Activated naive CD4-positive, alpha-beta T cell treated with anti-CD3 and anti-CD28 coated beads for 36 hours (primary cell): ENCODE measurements at regions of chr9 and their contacts with region 1.

Region 1: GRCh38 chr9:137223078-137223970 is 1.3 kb upstream of the RNF208 start:
- DNase-seq: peak; percentile 99
- H3K4me3 Mint-ChIP-seq: peak overlapping the region; percentile 85
- H3K27ac Mint-ChIP-seq: no peak overlapping the region
- H3K4me1 Mint-ChIP-seq: peaks cover 8% of the 10 kb centered on the region
- H3K27me3 Mint-ChIP-seq: peaks cover 2% of the 10 kb centered on the region

Region 2: GRCh38 chr9:137114610-137115391 is 108.5 kb before region 1 on chr9 and contains the start of gene DPP7:
- CTCF ChIA-PET with region 1: interaction called, 19 read pairs
- intact Hi-C with region 1: loop called (anchors 1 kb)
- DNase-seq: peak; percentile 74
- H3K4me3 Mint-ChIP-seq: peak within 1 kb of the TSS; percentile 73
- H3K27ac Mint-ChIP-seq: no peak within 1 kb of the TSS
- H3K4me1 Mint-ChIP-seq: peaks cover 14% of the 10 kb centered on the region
- H3K27me3 Mint-ChIP-seq: no peaks in the 10 kb centered on the region
- total RNA-seq, gene DPP7: 162 to 167 TPM

Region 3: GRCh38 chr9:137150617-137151457 is 72.5 kb before region 1 on chr9:
- CTCF ChIA-PET with region 1: no interaction called
- intact Hi-C with region 1: loop called (anchors 1 kb)
- DNase-seq: peak; percentile 89
- H3K4me3 Mint-ChIP-seq: no peak overlapping the region
- H3K27ac Mint-ChIP-seq: peak overlapping the region; percentile 61
- H3K4me1 Mint-ChIP-seq: peaks cover 7% of the 10 kb centered on the region
- H3K27me3 Mint-ChIP-seq: peaks cover 16% of the 10 kb centered on the region

Region 4: DNA sequence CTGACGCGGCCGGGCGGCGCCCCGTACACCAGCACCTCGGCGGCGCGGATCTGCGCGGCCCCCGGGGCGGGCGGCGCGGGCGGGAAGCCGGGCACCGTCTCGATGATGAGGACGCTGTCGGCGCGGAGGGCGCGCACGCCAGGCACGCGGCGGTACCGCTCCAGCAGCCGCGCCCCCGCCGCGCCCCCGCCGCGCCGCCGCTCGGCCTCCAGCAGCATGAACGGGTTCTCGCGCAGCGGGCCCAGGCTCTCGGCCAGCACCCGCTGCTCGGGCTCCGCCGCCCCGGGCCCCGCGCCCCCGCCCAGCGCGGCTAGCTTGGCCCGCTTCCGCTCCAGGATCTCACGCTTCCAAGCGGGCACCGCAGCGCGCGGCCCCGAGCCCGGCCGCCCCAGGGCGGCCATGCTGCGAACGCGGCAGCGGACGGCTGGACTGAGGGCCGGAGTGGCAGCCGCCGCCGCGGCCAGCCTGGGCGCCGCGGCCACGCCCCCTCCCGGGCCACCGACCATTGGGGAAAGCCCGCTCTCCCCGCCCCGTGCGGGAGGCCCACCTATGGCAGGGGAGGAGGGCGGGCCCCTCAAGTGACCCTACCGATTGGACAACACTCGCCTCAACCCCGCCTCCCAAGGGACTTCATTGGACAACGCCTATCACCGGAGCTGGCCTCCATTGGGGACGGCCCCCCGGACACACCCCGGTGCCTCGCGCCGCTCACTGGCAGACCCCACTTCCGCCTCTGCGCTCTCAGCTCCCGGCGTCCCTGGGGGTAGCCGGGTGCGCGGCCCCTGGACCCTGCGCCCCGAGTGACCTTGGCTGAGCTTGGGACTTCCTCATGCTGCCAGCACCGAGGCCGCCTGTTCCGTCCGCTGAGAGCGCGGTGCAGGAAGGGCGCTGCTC is 22.8 kb before region 1 on chr9 and contains the start of gene TPRN:
- CTCF ChIA-PET with region 1: no interaction called
- intact Hi-C with region 1: loop called (anchors 1 kb)
- DNase-seq: peak; percentile 99
- H3K4me3 Mint-ChIP-seq: peak within 1 kb of the TSS; percentile 80
- H3K27ac Mint-ChIP-seq: peak within 1 kb of the TSS; percentile 56
- H3K4me1 Mint-ChIP-seq: peaks cover 33% of the 10 kb centered on the region
- H3K27me3 Mint-ChIP-seq: no peaks in the 10 kb centered on the region
- total RNA-seq, gene TPRN: 2.1 to 2.6 TPM

Region 5: DNA sequence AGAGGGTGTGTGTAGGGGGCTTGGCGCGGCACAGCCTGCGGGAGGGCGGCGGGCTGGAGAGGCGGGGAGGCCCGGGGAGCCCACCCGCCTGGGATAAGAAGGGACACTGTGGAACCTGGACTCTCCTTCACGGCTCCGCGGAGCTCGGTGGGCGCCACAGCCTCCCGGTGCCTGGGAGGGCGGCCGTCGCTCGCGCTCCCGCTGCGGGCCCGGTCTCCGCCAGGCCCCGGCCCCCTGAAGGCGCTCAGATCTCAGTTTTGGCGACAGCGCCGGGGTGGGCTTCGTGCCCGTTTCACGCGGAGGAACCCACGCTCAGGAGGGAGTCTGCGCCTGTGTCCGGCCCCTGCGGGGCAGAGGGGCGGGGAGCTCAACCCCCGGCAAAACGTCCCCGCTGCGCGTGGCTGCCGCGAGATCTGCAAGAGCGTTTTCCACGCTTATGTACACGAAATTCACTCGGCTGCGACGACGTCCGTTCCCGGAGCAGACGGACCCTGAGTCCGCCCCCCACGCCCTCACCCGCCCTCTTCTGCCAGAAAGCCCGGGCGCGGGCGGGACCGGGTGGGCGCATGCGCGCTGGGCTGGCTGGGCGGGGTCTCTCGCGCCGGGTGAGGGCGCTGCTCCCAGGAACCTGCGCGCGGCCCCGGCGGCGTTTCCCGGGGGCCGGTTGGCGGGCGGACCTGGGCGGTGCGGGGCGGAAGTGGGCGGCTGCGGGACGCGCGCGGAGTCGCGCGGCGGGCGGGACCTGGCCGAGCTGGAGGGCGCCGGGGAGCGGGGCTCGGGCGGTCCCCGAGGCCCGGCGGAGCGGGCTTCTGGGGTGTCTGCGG is 31.5 kb after region 1 on chr9 and contains the start of gene NELFB:
- CTCF ChIA-PET with region 1: no interaction called
- intact Hi-C with region 1: loop called (anchors 1 kb)
- DNase-seq: peak; percentile 95
- H3K4me3 Mint-ChIP-seq: peak within 1 kb of the TSS; percentile 85
- H3K27ac Mint-ChIP-seq: peak within 1 kb of the TSS; percentile 75
- H3K4me1 Mint-ChIP-seq: peaks cover 18% of the 10 kb centered on the region
- H3K27me3 Mint-ChIP-seq: no peaks in the 10 kb centered on the region
- total RNA-seq, gene NELFB: 47.0 to 47.1 TPM

Region 6: DNA sequence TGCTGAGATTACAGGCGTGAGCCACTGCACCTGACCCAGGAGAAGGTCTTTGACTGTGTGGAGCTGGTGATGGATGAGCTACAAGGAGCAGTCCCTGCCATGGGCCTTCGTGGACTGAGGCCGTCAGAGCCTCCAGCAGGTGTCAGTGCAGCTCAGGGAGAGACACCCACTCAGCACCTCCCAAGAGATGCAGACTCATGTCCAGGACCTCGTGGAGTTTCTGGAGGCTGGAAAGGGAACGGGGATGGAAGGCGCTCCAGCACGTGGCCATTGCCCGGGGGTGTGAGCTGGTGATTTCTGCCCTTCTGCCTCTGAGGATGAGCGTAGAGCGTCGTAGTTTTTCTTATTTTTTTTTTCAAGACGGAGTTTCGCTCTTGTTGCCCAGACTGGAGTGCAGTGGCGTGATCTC is 63.7 kb after region 1 on chr9:
- CTCF ChIA-PET with region 1: no interaction called
- intact Hi-C with region 1: no loop called
- DNase-seq: peak; percentile 46
- H3K4me3 Mint-ChIP-seq: no peak overlapping the region
- H3K27ac Mint-ChIP-seq: no peak overlapping the region
- H3K4me1 Mint-ChIP-seq: no peaks in the 10 kb centered on the region
- H3K27me3 Mint-ChIP-seq: peaks cover 10% of the 10 kb centered on the region

Region 7: DNA sequence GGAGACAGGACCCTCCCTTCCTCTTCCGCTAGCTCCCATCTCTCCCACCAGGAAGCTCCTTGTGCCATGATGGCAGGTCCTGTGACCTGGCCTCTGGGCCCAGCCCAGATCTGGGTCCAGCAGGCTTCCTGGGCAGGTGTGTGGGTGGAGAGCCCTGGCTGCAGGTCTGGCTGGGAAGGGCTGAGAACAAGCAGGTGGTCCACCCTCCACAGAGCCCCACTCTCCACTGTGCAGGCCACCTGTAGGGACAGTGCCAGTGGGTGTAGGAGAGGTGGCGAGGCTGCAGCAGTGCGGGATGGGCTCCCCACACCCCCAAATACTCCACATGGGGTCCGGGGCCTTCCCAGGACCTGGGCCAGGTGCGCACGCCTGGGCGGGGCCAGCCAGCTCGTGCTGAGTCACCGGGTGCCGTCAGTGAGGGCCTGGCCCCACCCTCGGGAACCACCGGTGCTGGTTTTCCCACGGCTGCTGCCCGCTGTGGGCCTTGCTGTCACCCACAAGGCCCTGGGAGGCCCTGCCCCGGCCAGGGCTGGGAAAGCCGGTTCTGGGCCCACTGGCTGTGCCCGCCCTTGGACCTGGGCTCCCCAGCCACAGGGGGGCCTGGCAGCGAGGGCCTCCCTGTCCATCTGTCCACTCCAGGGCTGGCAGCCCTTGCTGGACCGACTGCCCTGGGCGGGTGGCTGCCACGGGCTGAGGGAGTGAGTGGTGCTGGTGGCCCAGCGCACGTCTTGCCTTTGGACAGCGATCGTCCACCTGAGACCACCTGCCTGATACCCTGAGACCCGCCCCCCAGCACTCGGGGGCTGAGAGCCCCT is 88.1 kb after region 1 on chr9:
- CTCF ChIA-PET with region 1: no interaction called
- intact Hi-C with region 1: no loop called
- DNase-seq: peak; percentile 60
- H3K4me3 Mint-ChIP-seq: no peak overlapping the region
- H3K27ac Mint-ChIP-seq: no peak overlapping the region
- H3K4me1 Mint-ChIP-seq: no peaks in the 10 kb centered on the region
- H3K27me3 Mint-ChIP-seq: no peaks in the 10 kb centered on the region

Region 8: DNA sequence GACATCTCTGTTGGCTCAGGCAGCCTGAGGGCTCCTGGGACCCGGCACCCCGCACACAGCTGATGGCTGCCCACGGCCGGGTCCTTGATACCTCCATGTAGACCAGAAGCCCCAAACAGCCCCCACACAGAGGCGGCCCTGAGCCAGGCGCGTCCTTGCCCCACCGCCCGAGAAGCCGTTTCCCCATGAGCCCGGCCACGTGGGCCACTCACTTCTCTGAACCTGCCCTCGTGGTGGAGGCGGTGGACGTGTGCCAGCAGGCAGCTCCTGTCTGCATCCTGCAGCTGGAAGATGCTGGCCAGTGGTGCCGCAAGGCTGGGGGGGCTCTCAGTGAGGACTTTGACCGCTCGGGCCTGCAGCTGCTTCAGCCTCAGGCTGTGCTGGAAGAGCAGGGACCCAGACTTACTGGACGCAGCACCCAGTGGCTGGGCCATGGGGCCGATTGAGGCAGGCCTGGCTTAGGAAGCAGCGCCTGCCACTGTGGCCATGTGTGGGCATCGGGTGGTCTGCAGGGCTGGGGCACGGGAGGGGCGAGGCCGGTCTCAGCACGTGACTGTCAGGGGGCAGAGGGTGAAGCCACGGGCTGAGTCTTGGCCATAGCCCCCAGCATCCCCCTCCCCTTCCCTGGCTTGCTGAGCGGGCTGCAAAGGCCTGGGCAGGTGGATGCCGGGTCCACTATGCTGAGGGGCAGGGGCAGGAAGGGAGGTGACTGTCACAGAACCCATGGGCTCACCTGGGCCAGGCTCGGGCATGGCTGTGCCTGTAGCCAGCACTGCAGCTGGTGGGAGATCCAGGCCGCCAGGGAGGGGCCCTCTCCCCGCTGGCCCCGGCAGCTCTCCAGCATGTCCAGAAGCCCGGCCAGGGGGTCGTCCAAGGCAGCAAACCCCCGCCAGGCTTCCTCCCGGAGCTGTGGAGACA is 149.6 kb after region 1 on chr9:
- CTCF ChIA-PET with region 1: no interaction called
- intact Hi-C with region 1: no loop called
- DNase-seq: no peak
- H3K4me3 Mint-ChIP-seq: no peak overlapping the region
- H3K27ac Mint-ChIP-seq: no peak overlapping the region
- H3K4me1 Mint-ChIP-seq: no peaks in the 10 kb centered on the region
- H3K27me3 Mint-ChIP-seq: no peaks in the 10 kb centered on the region